ENCODE measurements at regions of chr6 and their contacts with region 1.

Region 1: DNA sequence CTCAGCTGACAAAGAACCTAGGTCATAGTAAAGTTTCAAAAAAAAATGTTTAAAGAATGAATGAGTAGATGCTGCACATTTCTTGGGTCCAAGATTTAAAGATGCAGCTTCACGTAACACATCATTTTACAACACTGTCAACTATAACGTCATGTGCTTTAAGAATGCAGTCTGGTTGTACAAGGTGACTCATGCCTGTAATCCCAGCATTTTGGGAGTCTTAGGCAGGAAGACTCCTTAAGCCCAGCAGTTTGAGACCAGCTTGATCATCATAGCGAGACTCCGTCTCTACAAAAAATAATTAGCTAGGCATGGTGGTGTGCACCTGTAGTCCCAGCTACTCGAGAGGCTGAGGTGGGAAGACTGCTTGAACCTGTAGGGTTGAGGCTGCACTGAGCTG is 21.9 kb downstream of the SLC17A5 start:
- DNase-seq: no peak
- H3K4me3 ChIP-seq: no peak overlapping the region
- H3K27ac ChIP-seq: no peak overlapping the region
- H3K4me1 ChIP-seq: no peaks in the 10 kb centered on the region
- H3K27me3 ChIP-seq: no peaks in the 10 kb centered on the region

Region 2: GRCh38 chr6:73610444-73611275 is 21.2 kb before region 1 on chr6:
- CTCF ChIA-PET with region 1: interaction called, 12 read pairs
- POLR2A ChIA-PET with region 1: no interaction called
- DNase-seq: peak; percentile 54 to 75 (median 62)
- H3K4me3 ChIP-seq: no peak overlapping the region
- H3K27ac ChIP-seq: no peak overlapping the region
- H3K4me1 ChIP-seq: no peaks in the 10 kb centered on the region
- H3K27me3 ChIP-seq: no peaks in the 10 kb centered on the region

Region 3: GRCh38 chr6:73653571-73654424 is 21.9 kb after region 1 on chr6 and contains the start of gene SLC17A5:
- CTCF ChIA-PET with region 1: interaction called, 11 read pairs
- POLR2A ChIA-PET with region 1: interaction called, 3 read pairs
- DNase-seq: peak; percentile 92 to 97 (median 95)
- H3K4me3 ChIP-seq: peak within 1 kb of the TSS; percentile 86 to 97 (median 94)
- H3K27ac ChIP-seq: peak within 1 kb of the TSS; percentile 61 to 90
- H3K4me1 ChIP-seq: peaks cover 4 to 26% (median 15%) of the 10 kb centered on the region in 4 experiments
- H3K27me3 ChIP-seq: no peaks in the 10 kb centered on the region